GM12878 (cell line): ENCODE measurements at regions of chr5 and their contacts with region 1.

Region 1: DNA sequence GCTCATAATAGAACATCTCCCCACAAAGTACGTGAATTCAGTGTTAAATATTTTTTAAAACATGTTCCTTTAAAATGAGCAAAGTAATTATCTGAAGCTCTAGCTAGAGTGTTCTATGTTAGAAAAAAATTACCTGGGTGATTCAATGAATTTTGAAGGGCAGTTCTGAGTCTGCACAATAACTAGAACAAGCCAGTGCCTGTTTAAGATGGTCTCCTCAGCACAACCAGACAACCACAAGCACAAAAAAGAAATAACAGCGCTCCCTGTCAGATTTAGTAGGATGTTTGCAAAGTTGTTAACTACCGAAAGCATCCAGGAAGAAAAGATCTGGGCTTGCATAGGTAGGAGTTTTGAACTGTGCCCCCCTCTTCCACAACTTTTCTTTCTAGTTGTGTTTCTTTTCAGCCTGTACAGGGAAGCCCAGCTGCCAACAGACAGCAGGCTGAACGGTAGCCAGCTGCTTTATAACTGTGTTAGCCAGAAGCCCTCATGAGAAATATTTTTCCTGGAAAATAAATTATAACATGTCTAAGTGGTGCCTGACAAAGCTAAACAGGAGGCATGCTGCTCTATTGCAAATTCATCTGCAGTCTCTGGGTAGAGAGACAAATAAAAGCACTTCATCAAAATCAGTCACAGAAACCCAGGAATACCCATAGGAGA is 1026.9 kb downstream of the MAT2B start:
- DNase-seq: no peak
- ATAC-seq: no peak
- H3K4me3 ChIP-seq: no peak overlapping the region
- H3K27ac ChIP-seq: no peak overlapping the region
- H3K4me1 ChIP-seq: no peaks in the 10 kb centered on the region
- H3K27me3 ChIP-seq: no peaks in the 10 kb centered on the region
- CTCF ChIP-seq: no peak
- EP300 ChIP-seq: no peak
- POLR2A ChIP-seq: no peak
- RAD21 ChIP-seq: no peak

Region 2: DNA sequence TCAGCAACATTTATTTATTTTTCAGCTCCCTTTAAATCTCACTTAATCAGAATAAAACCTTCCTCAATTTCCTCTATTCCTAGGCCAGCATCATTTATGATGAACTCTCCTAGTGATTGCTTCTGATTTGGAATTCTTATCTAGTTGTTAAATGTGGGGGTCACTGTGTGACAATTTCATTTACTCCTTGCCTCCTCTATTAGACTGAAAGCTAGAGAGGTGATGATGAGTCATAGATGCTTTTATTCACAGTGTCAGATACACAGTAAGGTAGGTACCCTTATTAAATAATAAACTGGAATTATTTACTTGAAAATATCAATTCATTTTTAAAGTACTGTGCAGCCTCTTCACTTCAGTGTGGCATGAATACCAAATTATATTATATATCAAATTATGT is 66.3 kb before region 1 on chr5:
- CTCF ChIA-PET with region 1: no interaction called
- POLR2A ChIA-PET with region 1: no interaction called
- RAD21 ChIA-PET with region 1: no interaction called
- SMC1A ChIA-PET with region 1: no interaction called
- in situ Hi-C with region 1: no loop called
- intact Hi-C with region 1: loop called (anchors 10 kb)
- DNase-seq: no peak
- ATAC-seq: no peak
- H3K4me3 ChIP-seq: no peak overlapping the region
- H3K27ac ChIP-seq: no peak overlapping the region
- H3K4me1 ChIP-seq: no peaks in the 10 kb centered on the region
- H3K27me3 ChIP-seq: no peaks in the 10 kb centered on the region
- CTCF ChIP-seq: no peak
- EP300 ChIP-seq: no peak
- POLR2A ChIP-seq: no peak
- RAD21 ChIP-seq: no peak

Region 3: DNA sequence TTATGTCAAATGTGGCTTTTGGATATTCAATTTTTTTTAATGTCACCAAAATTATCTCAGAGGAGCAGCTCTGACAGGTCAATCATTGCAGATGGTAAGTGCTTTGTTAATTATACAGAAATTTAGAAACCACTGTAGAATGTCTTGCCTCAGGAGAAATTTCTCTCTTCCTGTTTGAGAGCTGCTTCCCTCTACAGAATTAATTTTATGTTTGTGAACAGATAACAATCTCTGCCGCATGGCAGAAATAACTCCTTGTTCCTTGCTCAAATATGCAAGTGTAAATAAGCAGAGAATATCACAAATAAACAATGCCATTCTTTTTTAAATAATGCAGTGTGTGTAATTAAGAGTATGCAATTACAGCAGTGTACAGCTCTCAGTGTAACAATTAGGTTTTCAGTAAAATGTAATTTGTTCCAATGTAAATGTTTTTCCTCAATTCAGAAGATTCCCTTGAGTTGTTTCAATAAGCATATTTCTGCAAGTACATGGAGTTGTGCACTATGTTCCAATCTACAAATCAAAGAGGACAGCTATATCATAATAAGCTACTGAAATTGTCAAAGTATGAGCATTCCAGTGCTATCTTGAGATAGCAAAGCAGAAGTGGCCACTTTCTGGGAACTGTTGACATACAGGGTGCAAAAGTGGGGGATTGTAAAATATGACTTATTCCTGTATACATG is 14.2 kb before region 1 on chr5:
- CTCF ChIA-PET with region 1: interaction called, 15 read pairs
- POLR2A ChIA-PET with region 1: interaction called, 4 read pairs
- RAD21 ChIA-PET with region 1: interaction called, 3 read pairs
- SMC1A ChIA-PET with region 1: interaction called, 20 read pairs
- in situ Hi-C with region 1: no loop called
- intact Hi-C with region 1: no loop called
- DNase-seq: no peak
- ATAC-seq: no peak
- H3K4me3 ChIP-seq: no peak overlapping the region
- H3K27ac ChIP-seq: no peak overlapping the region
- H3K4me1 ChIP-seq: no peaks in the 10 kb centered on the region
- H3K27me3 ChIP-seq: no peaks in the 10 kb centered on the region
- CTCF ChIP-seq: no peak
- EP300 ChIP-seq: no peak
- POLR2A ChIP-seq: no peak
- RAD21 ChIP-seq: no peak